ENCODE measurements at regions of chr11 and their contacts with region 1.

Region 1: DNA sequence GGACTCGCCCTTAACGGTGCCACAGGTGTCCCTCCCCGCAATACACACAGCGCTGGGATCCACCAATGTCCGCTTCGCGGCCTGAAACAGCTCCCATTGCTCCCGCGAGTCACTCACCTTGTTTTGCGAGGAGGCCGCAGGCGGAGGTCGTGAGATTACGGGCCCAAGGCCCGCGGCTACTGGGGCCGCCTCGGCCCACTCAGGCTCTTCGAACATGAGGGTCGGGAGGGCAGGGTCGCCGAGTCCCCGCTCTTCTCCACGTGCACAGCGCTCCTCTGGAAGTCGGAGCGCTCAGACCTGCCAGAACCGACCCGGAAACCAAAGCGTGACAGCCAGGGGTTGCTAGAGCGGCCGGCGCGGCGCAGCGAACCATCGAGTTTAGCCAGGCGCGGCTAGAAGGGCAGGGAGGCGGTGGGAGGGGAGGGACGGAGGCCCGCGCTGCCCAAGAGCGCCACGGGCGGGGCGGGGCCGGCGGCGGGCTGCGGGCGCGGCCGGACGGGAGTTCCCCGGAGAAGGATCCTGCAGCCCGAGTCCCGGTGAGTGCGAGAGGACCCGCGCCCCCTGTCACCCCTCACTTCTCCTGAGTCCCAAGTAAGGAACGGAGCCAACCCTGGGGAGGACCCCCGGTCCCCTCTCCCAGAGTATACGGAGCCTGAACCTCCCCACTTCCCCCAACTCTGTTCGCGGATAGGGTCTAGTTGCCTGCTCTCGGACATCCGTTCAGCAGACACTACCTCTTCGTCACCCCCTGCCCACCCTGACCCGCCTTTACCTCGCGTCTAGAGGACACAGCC is at the starts of genes ILK and RRP8:
- DNase-seq: peak; percentile 66 to 92 (median 87)
- ATAC-seq: peak; percentile 78
- H3K4me3 ChIP-seq: peak within 1 kb of the TSS; percentile 93 to 97
- H3K4me3 Mint-ChIP-seq: no peak within 1 kb of the TSS
- H3K27ac ChIP-seq: peak within 1 kb of the TSS; percentile 65 to 88
- H3K27ac Mint-ChIP-seq: no peak within 1 kb of the TSS
- H3K4me1 ChIP-seq: peaks cover 60% of the 10 kb centered on the region
- H3K4me1 Mint-ChIP-seq: peaks cover 40% of the 10 kb centered on the region
- H3K27me3 ChIP-seq: no peaks in the 10 kb centered on the region
- H3K27me3 Mint-ChIP-seq: no peaks in the 10 kb centered on the region
- CTCF ChIP-seq: no peak
- total RNA-seq, gene ILK: 26.6 to 31.6 TPM
- total RNA-seq, gene RRP8: 29.1 to 31.3 TPM

Region 2: GRCh38 chr11:6531267-6531752 is 72.2 kb before region 1 on chr11:
- CTCF ChIA-PET with region 1: interaction called, 8 read pairs
- POLR2A ChIA-PET with region 1: no interaction called
- intact Hi-C with region 1: loop called (anchors 5 kb)
- DNase-seq: peak in 3 of 9 experiments; percentile 14 to 68 (median 56)
- ATAC-seq: peak; percentile 83
- H3K4me3 ChIP-seq: no peak overlapping the region
- H3K4me3 Mint-ChIP-seq: no peak overlapping the region
- H3K27ac ChIP-seq: no peak overlapping the region
- H3K27ac Mint-ChIP-seq: no peak overlapping the region
- H3K4me1 ChIP-seq: peaks cover 4% of the 10 kb centered on the region
- H3K4me1 Mint-ChIP-seq: peaks cover 7% of the 10 kb centered on the region
- H3K27me3 ChIP-seq: no peaks in the 10 kb centered on the region
- H3K27me3 Mint-ChIP-seq: no peaks in the 10 kb centered on the region
- CTCF ChIP-seq: peak; percentile 84

Region 3: GRCh38 chr11:6619004-6619745 is 15.7 kb after region 1 on chr11 and contains the start of gene TPP1:
- CTCF ChIA-PET with region 1: interaction called, 16 read pairs
- POLR2A ChIA-PET with region 1: interaction called, 13 read pairs
- intact Hi-C with region 1: loop called (anchors 1 to 2 kb)
- DNase-seq: peak; percentile 79 to 96 (median 89)
- ATAC-seq: peak; percentile 91
- H3K4me3 ChIP-seq: peak within 1 kb of the TSS; percentile 80 to 89
- H3K4me3 Mint-ChIP-seq: no peak within 1 kb of the TSS
- H3K27ac ChIP-seq: peak within 1 kb of the TSS; percentile 75 to 96
- H3K27ac Mint-ChIP-seq: no peak within 1 kb of the TSS
- H3K4me1 ChIP-seq: peaks cover 23% of the 10 kb centered on the region
- H3K4me1 Mint-ChIP-seq: peaks cover 9% of the 10 kb centered on the region
- H3K27me3 ChIP-seq: no peaks in the 10 kb centered on the region
- H3K27me3 Mint-ChIP-seq: no peaks in the 10 kb centered on the region
- CTCF ChIP-seq: no peak
- total RNA-seq, gene TPP1: 31.1 to 34.8 TPM

Region 4: GRCh38 chr11:6655020-6655789 is 51.7 kb after region 1 on chr11:
- CTCF ChIA-PET with region 1: interaction called, 5 read pairs
- POLR2A ChIA-PET with region 1: interaction called, 4 read pairs
- intact Hi-C with region 1: loop called in 1 of 2 experiments (anchors 10 kb)
- DNase-seq: peak in 7 of 9 experiments; percentile 11 to 62 (median 52)
- ATAC-seq: peak; percentile 58
- H3K4me3 ChIP-seq: peak overlapping the region; percentile 42 to 43
- H3K4me3 Mint-ChIP-seq: no peak overlapping the region
- H3K27ac ChIP-seq: peak overlapping the region; percentile 6 to 44
- H3K27ac Mint-ChIP-seq: no peak overlapping the region
- H3K4me1 ChIP-seq: peaks cover 36% of the 10 kb centered on the region
- H3K4me1 Mint-ChIP-seq: peaks cover 12% of the 10 kb centered on the region
- H3K27me3 ChIP-seq: no peaks in the 10 kb centered on the region
- H3K27me3 Mint-ChIP-seq: no peaks in the 10 kb centered on the region
- CTCF ChIP-seq: no peak

Region 5: GRCh38 chr11:6667733-6668374 is 64.4 kb after region 1 on chr11:
- CTCF ChIA-PET with region 1: interaction called, 15 read pairs
- POLR2A ChIA-PET with region 1: interaction called, 7 read pairs
- intact Hi-C with region 1: loop called in 1 of 2 experiments (anchors 1 kb)
- DNase-seq: peak in 6 of 9 experiments; percentile 16 to 81 (median 50)
- ATAC-seq: peak; percentile 76
- H3K4me3 ChIP-seq: no peak overlapping the region
- H3K4me3 Mint-ChIP-seq: peak overlapping the region; percentile 13
- H3K27ac ChIP-seq: peak overlapping the region in 1 of 2 experiments; percentile 47
- H3K27ac Mint-ChIP-seq: peak overlapping the region; percentile 81
- H3K4me1 ChIP-seq: peaks cover 59% of the 10 kb centered on the region
- H3K4me1 Mint-ChIP-seq: peaks cover 66% of the 10 kb centered on the region
- H3K27me3 ChIP-seq: no peaks in the 10 kb centered on the region
- H3K27me3 Mint-ChIP-seq: no peaks in the 10 kb centered on the region
- CTCF ChIP-seq: peak; percentile 57

Region 6: GRCh38 chr11:6737872-6738466 is 134.5 kb after region 1 on chr11:
- CTCF ChIA-PET with region 1: interaction called, 10 read pairs
- POLR2A ChIA-PET with region 1: no interaction called
- intact Hi-C with region 1: no loop called
- DNase-seq: peak; percentile 44 to 87 (median 69)
- ATAC-seq: peak; percentile 54
- H3K4me3 ChIP-seq: no peak overlapping the region
- H3K4me3 Mint-ChIP-seq: peak overlapping the region; percentile 9
- H3K27ac ChIP-seq: peak overlapping the region; percentile 1 to 8
- H3K27ac Mint-ChIP-seq: peak overlapping the region; percentile 87
- H3K4me1 ChIP-seq: peaks cover 91% of the 10 kb centered on the region
- H3K4me1 Mint-ChIP-seq: peaks cover 91% of the 10 kb centered on the region
- H3K27me3 ChIP-seq: no peaks in the 10 kb centered on the region
- H3K27me3 Mint-ChIP-seq: no peaks in the 10 kb centered on the region
- CTCF ChIP-seq: peak; percentile 59

Region 7: DNA sequence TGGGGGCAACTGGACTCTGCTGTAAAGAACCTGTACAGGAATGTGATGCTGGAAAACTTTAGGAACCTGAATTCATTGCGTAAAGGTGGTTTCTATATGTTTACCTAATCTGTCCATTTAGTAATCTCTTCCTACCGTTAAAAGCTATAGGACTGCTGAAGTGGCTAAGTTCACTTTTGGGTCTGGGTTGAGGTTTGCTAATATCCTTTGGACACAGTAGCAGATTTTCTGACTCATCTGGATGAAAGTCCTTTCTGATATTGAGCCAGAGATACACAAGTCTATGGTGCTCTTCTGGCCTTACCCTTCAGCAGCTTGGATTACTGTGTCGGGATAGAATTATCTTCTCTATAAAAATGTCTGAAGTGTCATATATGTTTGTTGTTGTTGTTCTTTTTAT is 339.6 kb after region 1 on chr11:
- CTCF ChIA-PET with region 1: no interaction called
- POLR2A ChIA-PET with region 1: no interaction called
- intact Hi-C with region 1: no loop called
- DNase-seq: no peak
- ATAC-seq: no peak
- H3K4me3 ChIP-seq: no peak overlapping the region
- H3K4me3 Mint-ChIP-seq: no peak overlapping the region
- H3K27ac ChIP-seq: no peak overlapping the region
- H3K27ac Mint-ChIP-seq: no peak overlapping the region
- H3K4me1 ChIP-seq: no peaks in the 10 kb centered on the region
- H3K4me1 Mint-ChIP-seq: no peaks in the 10 kb centered on the region
- H3K27me3 ChIP-seq: no peaks in the 10 kb centered on the region
- H3K27me3 Mint-ChIP-seq: no peaks in the 10 kb centered on the region
- CTCF ChIP-seq: no peak